ENCODE measurements at regions of chr2 and their contacts with region 1.

Region 1: GRCh38 chr2:69565431-69565839 is 78.1 kb downstream of the AAK1 start:
- DNase-seq: peak; percentile 50 to 70
- ATAC-seq: peak; percentile 66 to 82; a peak in 5 of 6 replicates
- H3K4me3 ChIP-seq: no peak overlapping the region
- H3K27ac ChIP-seq: no peak overlapping the region
- H3K4me1 ChIP-seq: peaks cover 55% of the 10 kb centered on the region
- CTCF ChIP-seq: peak; percentile 80
- EP300 ChIP-seq: no peak
- POLR2A ChIP-seq: no peak
- RAD21 ChIP-seq: peak; percentile 45 to 54; a peak in 4 of 5 replicates

Region 2: GRCh38 chr2:69054431-69054830 is 511.0 kb before region 1 on chr2:
- CTCF ChIA-PET with region 1: no interaction called
- POLR2A ChIA-PET with region 1: no interaction called
- DNase-seq: no peak
- ATAC-seq: no peak
- H3K4me3 ChIP-seq: no peak overlapping the region
- H3K27ac ChIP-seq: no peak overlapping the region
- H3K4me1 ChIP-seq: peaks cover 21% of the 10 kb centered on the region; the same call in 2 of the 3 replicates
- CTCF ChIP-seq: no peak
- EP300 ChIP-seq: no peak
- POLR2A ChIP-seq: no peak
- RAD21 ChIP-seq: no peak

Region 3: DNA sequence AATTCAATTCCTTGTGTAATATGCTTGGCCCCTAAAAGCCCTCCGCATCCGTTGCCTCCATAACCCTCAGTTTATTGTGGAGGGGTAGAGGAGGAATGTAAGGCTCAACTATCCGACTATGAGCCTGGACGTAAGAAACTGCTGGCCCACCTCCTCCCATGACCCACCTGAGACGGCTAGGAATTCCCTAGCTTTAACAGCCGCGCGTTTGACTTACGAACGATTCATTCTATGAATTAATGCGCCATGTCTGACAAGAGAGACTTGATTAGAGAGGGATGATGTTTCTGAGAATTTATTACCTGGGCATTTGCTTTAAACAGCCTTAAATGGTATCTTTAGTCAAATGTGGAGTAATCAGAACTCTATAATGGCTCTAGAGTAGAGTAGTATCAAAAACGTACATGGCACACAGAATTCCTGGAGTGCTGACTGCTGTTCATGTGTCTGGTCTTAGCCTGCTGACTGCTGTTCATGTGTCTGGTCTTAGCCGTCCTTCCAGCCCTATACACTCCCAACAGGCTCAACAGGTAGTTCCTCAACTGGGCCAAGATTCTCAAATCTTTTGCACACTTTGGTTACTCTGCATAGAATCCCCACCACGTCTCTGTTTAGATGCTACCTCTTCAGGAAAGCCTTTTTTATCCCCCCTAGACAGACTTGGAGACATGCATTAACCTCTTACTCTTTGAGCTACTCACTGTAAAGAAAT is 177.5 kb before region 1 on chr2:
- CTCF ChIA-PET with region 1: no interaction called
- POLR2A ChIA-PET with region 1: no interaction called
- DNase-seq: no peak
- ATAC-seq: no peak
- H3K4me3 ChIP-seq: peak overlapping the region; percentile 77
- H3K27ac ChIP-seq: peak overlapping the region; percentile 89 to 97
- H3K4me1 ChIP-seq: peaks cover 35% of the 10 kb centered on the region
- CTCF ChIP-seq: no peak
- EP300 ChIP-seq: no peak
- POLR2A ChIP-seq: no peak
- RAD21 ChIP-seq: no peak

Region 4: DNA sequence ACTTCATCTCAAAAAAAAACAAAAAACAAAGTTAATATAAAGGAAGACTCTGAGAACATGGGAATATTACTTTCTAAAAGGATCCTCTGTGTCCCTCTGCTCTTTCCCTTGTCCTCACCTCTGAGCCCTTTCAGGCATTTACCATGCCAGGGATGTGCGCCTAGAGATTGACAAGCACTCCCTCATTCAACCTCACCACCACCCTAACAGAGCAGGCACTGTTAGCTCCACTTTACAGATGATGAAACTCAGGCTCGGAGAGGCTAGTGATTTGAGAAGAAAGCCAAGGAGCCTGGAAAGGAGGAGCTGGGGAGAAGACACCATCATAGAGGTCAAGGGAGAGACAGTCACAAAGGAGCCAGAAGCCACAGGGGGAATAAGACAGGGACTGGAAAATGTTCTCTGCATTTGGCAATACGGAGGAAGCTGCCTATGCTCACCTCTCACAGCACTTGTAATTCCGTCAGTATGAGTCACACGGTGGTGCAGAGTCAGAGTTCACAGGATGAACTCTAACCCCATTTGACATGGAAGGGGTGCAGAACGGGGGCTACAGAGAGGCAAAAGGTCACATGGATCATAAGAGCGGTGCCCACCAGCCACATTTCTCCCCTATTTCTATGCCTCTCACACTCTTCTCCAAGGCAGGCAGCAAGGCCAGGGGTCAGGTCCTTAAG is 26.4 kb before region 1 on chr2:
- CTCF ChIA-PET with region 1: interaction called, 11 read pairs
- POLR2A ChIA-PET with region 1: no interaction called
- DNase-seq: no peak
- ATAC-seq: peak; percentile 64 to 78; a peak in 5 of 6 replicates
- H3K4me3 ChIP-seq: no peak overlapping the region
- H3K27ac ChIP-seq: peak overlapping the region in 1 of 2 experiments; percentile 61; a peak in 3 of 6 replicates
- H3K4me1 ChIP-seq: peaks cover 12% of the 10 kb centered on the region
- CTCF ChIP-seq: no peak
- EP300 ChIP-seq: no peak
- POLR2A ChIP-seq: no peak
- RAD21 ChIP-seq: no peak

Region 5: DNA sequence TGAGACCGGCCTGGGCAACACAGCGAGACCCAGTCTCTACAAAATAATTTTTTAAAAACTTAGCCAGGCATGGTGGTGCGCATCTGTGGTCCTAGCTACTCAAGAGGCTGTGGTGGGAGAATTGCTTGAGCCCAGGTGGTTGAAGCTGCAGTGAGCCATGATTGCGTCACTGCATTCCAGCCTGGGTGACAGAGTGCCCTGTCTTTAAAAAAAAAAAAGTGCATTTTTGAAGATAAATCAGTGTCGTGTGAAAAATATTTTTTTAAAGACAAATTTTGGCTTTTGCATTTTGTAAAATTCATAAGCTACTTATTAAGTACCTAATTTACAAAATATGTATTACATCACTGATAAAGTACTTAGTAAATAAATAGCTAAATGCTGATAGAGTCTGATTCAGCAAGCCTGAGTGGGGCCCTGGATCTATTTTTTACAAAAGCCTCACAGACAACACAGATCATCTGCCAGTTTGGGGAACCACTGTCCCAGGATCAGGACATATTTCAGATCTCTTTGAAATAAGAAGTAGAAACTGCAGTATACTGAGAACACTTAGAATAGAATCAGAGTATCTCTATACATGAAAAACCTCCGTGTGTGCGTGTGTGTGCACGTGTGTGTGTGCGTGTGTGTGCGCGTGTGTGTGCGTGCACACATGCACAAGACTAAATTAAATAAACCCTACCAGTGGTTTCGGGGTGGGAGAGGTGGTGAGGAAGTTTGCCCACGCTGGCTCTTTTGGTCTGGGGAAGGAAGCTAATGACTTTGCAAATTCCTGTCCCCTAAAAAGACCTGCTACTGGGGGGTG is 16.5 kb after region 1 on chr2:
- CTCF ChIA-PET with region 1: interaction called, 29 read pairs
- POLR2A ChIA-PET with region 1: no interaction called
- DNase-seq: peak in 1 of 2 experiments; percentile 39
- ATAC-seq: peak; percentile 16 to 64; a peak in 4 of 6 replicates
- H3K4me3 ChIP-seq: no peak overlapping the region
- H3K27ac ChIP-seq: peak overlapping the region; percentile 54 to 76
- H3K4me1 ChIP-seq: peaks cover 32% of the 10 kb centered on the region
- CTCF ChIP-seq: no peak
- EP300 ChIP-seq: no peak
- POLR2A ChIP-seq: no peak
- RAD21 ChIP-seq: no peak

Region 6: DNA sequence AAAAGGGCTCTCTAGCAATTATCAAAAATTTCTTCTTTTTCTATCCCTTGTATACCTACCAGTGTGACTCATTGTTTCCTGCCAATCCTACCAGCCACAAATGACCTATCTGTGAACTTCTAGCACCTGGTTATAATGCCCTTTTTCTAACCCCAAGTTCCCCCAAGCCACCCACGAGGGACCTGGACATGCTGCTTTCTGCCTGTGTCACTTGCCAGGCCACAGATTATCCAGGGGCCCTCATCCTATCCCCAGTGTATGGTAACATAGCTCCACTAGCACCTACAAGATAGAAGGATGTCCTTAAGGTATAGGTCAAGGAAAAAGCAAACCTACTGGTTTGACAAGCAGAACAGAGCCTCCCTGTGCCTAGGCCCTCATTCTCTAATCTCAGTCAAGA is 51.3 kb after region 1 on chr2:
- CTCF ChIA-PET with region 1: interaction called, 10 read pairs
- POLR2A ChIA-PET with region 1: no interaction called
- DNase-seq: no peak
- ATAC-seq: no peak
- H3K4me3 ChIP-seq: no peak overlapping the region
- H3K27ac ChIP-seq: no peak overlapping the region
- H3K4me1 ChIP-seq: peaks cover 19% of the 10 kb centered on the region
- CTCF ChIP-seq: no peak
- EP300 ChIP-seq: no peak
- POLR2A ChIP-seq: no peak
- RAD21 ChIP-seq: no peak

Region 7: GRCh38 chr2:69717861-69718273 is 152.4 kb after region 1 on chr2:
- CTCF ChIA-PET with region 1: interaction called, 66 read pairs
- POLR2A ChIA-PET with region 1: no interaction called
- DNase-seq: peak in 1 of 2 experiments; percentile 37
- ATAC-seq: peak in 1 of 2 experiments; percentile 27; a peak in 3 of 6 replicates
- H3K4me3 ChIP-seq: no peak overlapping the region
- H3K27ac ChIP-seq: peak overlapping the region in 1 of 2 experiments; percentile 77; a peak in 3 of 6 replicates
- H3K4me1 ChIP-seq: peaks cover 35% of the 10 kb centered on the region
- CTCF ChIP-seq: no peak
- EP300 ChIP-seq: 0 out of 5 replicates have a peak, but pooled peaks of 1 of the 2 experiments have one; percentile 31
- POLR2A ChIP-seq: no peak
- RAD21 ChIP-seq: no peak

Measured in A549 (cell line).